Caco-2 (cell line): ENCODE measurements at regions of chr7 and their contacts with region 1.

Region 1: GRCh38 chr7:100914879-100915447 is 19.3 kb upstream of the ACHE start:
- DNase-seq: no peak
- H3K4me3 ChIP-seq: no peak overlapping the region
- H3K4me3 Mint-ChIP-seq: no peak overlapping the region
- H3K27ac Mint-ChIP-seq: peak overlapping the region; percentile 56
- H3K4me1 ChIP-seq: peaks cover 35% of the 10 kb centered on the region
- H3K4me1 Mint-ChIP-seq: peaks cover 26% of the 10 kb centered on the region
- H3K27me3 ChIP-seq: no peaks in the 10 kb centered on the region
- H3K27me3 Mint-ChIP-seq: no peaks in the 10 kb centered on the region
- CTCF ChIP-seq: no peak

Region 2: GRCh38 chr7:100942045-100942768 is 27.2 kb after region 1 on chr7:
- CTCF ChIA-PET with region 1: no interaction called
- POLR2A ChIA-PET with region 1: no interaction called
- intact Hi-C with region 1: loop called (anchors 2 kb)
- DNase-seq: peak; percentile 68 to 71
- H3K4me3 ChIP-seq: no peak overlapping the region
- H3K4me3 Mint-ChIP-seq: peak overlapping the region; percentile 21
- H3K27ac Mint-ChIP-seq: peak overlapping the region; percentile 2
- H3K4me1 ChIP-seq: peaks cover 13% of the 10 kb centered on the region
- H3K4me1 Mint-ChIP-seq: peaks cover 11% of the 10 kb centered on the region
- H3K27me3 ChIP-seq: no peaks in the 10 kb centered on the region
- H3K27me3 Mint-ChIP-seq: no peaks in the 10 kb centered on the region
- CTCF ChIP-seq: no peak